Activated B cell treated with CpG ODN at 0.5 μM for 24 hours (primary cell): ENCODE measurements at regions of chr12 and their contacts with region 1.

Region 1: GRCh38 chr12:116277393-116278278 is at the start of gene MED13L:
- DNase-seq: peak; percentile 90
- ATAC-seq: peak; percentile 77
- H3K4me3 Mint-ChIP-seq: peak within 1 kb of the TSS; percentile 92
- H3K27ac Mint-ChIP-seq: peak within 1 kb of the TSS; percentile 90
- H3K4me1 Mint-ChIP-seq: peaks cover 45% of the 10 kb centered on the region
- H3K27me3 Mint-ChIP-seq: no peaks in the 10 kb centered on the region
- CTCF ChIP-seq: no peak
- total RNA-seq, gene MED13L: 164 and 183 TPM in 2 replicates

Region 2: DNA sequence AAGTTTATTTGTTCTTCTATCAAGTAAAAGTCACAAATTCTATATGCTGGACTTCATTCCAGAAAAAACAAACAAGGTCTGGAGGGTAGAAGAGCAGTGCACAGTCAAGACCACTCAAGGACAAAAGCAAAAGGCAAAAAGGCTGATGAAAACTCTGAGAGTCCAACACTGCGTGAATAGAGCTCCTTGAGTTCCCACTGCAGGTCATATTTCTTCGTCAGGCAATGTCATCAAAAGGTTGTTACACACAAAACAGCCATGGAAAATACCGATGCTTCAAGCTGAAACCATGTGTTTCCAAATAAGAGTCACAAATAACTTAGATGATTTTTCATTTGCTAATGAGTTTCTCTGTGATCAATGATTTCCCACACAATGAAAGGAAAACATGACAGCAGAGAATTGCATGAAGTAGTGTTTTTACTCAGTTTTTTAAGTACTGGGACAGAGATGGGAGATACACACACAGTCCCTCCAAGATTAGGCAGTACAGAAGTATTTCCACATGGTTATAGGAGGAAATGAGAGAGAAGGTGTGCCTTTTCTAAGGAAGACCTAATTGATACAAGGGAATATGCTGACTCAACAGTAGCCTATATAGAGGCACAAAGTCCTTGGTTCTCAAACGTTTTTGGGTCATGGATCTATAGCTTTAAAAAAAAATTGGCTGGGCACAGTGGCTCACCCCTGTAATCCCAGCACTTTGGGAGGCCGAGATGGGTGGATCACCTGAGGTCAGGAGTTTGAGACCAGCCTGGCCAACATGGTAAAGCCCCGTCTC is 177.8 kb before region 1 on chr12:
- CTCF ChIA-PET with region 1: no interaction called
- POLR2A ChIA-PET with region 1: no interaction called
- intact Hi-C with region 1: no loop called
- DNase-seq: no peak
- ATAC-seq: no peak
- H3K4me3 Mint-ChIP-seq: no peak overlapping the region
- H3K27ac Mint-ChIP-seq: no peak overlapping the region
- H3K4me1 Mint-ChIP-seq: peaks cover 41% of the 10 kb centered on the region
- H3K27me3 Mint-ChIP-seq: no peaks in the 10 kb centered on the region
- CTCF ChIP-seq: no peak

Region 3: GRCh38 chr12:116142936-116143898 is 134.4 kb before region 1 on chr12:
- CTCF ChIA-PET with region 1: interaction called, 3 read pairs
- POLR2A ChIA-PET with region 1: interaction called, 17 read pairs
- intact Hi-C with region 1: no loop called
- DNase-seq: no peak
- ATAC-seq: peak; percentile 72
- H3K4me3 Mint-ChIP-seq: peak overlapping the region; percentile 50
- H3K27ac Mint-ChIP-seq: peak overlapping the region; percentile 21
- H3K4me1 Mint-ChIP-seq: peaks cover 55% of the 10 kb centered on the region
- H3K27me3 Mint-ChIP-seq: no peaks in the 10 kb centered on the region
- CTCF ChIP-seq: no peak

Region 4: DNA sequence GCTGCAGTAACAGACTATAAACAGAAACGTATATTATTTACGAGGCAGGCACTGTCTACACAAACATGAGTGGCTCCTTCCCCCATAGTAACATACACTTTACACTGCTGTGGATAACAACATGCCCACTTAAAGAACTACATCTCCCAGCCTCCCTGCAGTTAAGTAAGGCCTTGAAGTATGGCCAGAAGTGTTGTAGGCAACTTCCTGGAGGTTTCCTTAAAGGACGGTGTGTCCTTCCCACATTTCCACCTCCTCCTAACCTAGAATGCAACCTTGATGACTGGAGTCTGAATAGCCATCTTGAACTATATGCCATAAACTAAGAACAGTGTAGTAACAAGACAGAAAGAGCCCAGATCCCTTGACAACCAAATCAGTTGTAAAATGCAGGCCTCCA is 20.4 kb before region 1 on chr12:
- CTCF ChIA-PET with region 1: interaction called, 9 read pairs
- POLR2A ChIA-PET with region 1: no interaction called
- intact Hi-C with region 1: loop called (anchors 2 kb)
- DNase-seq: no peak
- ATAC-seq: no peak
- H3K4me3 Mint-ChIP-seq: no peak overlapping the region
- H3K27ac Mint-ChIP-seq: no peak overlapping the region
- H3K4me1 Mint-ChIP-seq: peaks cover 81% of the 10 kb centered on the region
- H3K27me3 Mint-ChIP-seq: no peaks in the 10 kb centered on the region
- CTCF ChIP-seq: no peak

Region 5: DNA sequence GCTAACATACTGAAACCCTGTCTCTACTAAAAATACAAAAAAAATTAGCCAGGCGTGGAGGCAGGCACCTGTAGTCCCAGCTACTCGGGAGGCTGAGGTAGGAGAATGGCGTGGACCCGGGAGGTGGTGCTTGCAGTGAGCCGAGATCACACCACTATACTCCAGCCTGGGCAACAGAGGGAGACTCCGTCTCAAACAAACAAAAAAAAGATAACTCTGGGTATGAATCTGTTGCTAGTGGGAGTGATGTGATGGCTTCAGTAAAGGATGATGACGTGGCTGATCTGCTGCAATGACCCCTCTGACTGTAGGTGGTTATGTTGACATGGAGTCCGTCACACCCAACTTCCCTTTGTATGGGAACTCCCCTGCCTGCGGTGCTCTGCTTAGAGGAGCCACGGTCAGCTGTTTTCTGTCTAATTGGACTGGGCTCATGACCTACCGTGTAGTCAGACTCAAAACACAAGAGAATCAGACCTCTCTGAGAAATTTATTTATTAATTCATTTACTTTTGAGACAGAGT is 59.0 kb after region 1 on chr12:
- CTCF ChIA-PET with region 1: interaction called, 3 read pairs
- POLR2A ChIA-PET with region 1: interaction called, 15 read pairs
- intact Hi-C with region 1: loop called (anchors 1 kb)
- DNase-seq: peak; percentile 51
- ATAC-seq: peak; percentile 88
- H3K4me3 Mint-ChIP-seq: peak overlapping the region; percentile 73
- H3K27ac Mint-ChIP-seq: peak overlapping the region; percentile 97
- H3K4me1 Mint-ChIP-seq: peaks cover 79% of the 10 kb centered on the region
- H3K27me3 Mint-ChIP-seq: no peaks in the 10 kb centered on the region
- CTCF ChIP-seq: no peak

Region 6: DNA sequence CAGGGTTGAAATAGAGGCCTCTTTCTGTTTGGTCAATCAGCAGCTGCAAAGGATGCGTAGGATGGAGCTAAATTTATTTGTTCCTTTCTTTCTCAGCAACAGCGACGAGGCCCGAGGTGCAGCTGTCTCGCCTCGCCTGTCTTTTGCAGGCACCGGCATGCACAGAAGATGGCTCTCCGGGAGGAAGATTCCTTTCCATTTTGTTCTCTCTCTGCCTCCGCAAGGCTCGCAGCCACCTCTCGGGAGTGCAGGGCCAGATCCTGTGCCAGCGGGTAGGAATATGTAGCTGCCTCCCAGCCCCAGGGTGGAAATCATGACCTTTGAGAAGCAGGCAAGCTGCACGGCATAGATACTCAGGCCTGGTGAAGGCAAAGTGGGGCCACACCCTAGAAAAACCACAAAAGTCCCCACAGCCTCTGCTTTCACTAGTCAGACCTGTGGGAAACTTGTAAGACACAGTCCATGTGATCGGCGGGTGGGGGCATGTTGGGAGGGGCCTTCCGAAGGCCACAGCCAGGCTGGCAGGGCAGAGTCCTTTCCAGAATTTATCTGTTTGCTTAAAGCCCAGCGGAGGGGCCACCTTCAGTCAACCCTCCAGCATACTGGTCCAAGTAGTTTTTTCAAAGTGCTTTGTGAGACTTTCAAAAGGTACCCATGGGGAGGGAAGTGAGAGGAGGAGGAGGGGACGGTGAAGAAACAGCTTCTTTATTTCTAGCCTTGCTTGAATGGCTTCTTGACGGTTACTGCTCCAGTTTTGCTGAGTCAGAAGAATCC is 281.7 kb after region 1 on chr12 and contains the start of gene MAP1LC3B2:
- CTCF ChIA-PET with region 1: interaction called, 4 read pairs
- POLR2A ChIA-PET with region 1: interaction called, 40 read pairs
- intact Hi-C with region 1: loop called (anchors 1 kb)
- DNase-seq: peak; percentile 77
- ATAC-seq: peak; percentile 83
- H3K4me3 Mint-ChIP-seq: peak within 1 kb of the TSS; percentile 84
- H3K27ac Mint-ChIP-seq: peak within 1 kb of the TSS; percentile 100
- H3K4me1 Mint-ChIP-seq: peaks cover 62% of the 10 kb centered on the region
- H3K27me3 Mint-ChIP-seq: no peaks in the 10 kb centered on the region
- CTCF ChIP-seq: no peak
- total RNA-seq, gene MAP1LC3B2: 1.0 and 1.9 TPM in 2 replicates

Region 7: DNA sequence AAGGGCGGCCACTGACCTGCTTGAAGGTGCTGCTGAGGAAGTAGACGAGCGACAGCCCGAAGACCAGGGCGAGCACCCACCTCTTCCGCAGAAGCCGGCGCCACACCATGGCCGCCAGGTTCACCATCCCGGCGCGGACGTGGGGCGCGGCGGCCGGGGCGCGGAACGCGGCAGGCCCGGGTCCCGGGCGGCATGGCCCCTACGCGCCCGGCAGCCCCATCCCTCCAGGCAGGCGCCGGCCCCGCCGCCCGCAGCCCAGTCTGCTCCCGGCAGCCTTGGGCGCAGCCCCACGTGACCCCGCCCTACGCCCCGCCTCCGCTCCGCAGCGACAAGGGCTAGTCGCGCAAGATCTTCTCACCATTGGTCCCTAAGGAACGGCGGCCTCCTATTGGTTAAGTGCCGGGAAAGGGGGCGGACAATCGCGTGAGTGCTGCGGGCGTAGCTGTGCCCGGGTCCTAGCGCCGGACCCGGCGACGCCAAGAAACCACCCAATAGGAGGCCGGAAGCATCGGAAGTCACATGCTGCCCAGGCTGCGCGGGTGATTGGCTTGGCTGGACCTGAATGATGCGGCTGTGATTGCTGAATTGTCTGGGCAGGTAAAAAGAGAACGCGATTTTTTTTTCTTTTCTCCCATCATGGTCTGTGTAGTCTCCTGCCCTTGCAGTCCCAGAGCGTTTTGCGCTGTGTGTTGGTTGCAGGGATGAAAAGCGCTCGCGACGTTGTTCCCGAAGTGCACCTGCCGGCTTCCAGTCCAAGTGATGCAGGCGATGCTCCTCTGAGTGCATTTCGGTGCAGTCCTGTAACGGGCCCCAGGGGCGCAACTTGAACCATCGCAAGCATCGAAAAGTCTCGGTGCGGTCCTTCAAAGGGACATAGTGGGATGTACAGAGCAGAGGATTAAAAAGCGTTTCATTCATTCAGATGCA is 460.4 kb after region 1 on chr12 and contains the starts of genes RNFT2 and SPRING1:
- CTCF ChIA-PET with region 1: no interaction called
- POLR2A ChIA-PET with region 1: no interaction called
- intact Hi-C with region 1: loop called (anchors 1 kb)
- DNase-seq: peak; percentile 97
- ATAC-seq: peak; percentile 97
- H3K4me3 Mint-ChIP-seq: peak within 1 kb of the TSS; percentile 99
- H3K27ac Mint-ChIP-seq: peak within 1 kb of the TSS; percentile 90
- H3K4me1 Mint-ChIP-seq: peaks cover 31% of the 10 kb centered on the region
- H3K27me3 Mint-ChIP-seq: no peaks in the 10 kb centered on the region
- CTCF ChIP-seq: no peak
- total RNA-seq, gene RNFT2: 7.5 and 8.7 TPM in 2 replicates
- total RNA-seq, gene SPRING1: 31.6 and 36.4 TPM in 2 replicates